ENCODE measurements at regions of chr2 and their contacts with region 1.

Region 1: GRCh38 chr2:24084386-24085361 is at the start of gene TP53I3:
- DNase-seq: peak; percentile 90
- ATAC-seq: peak; percentile 96 to 97
- total RNA-seq, gene TP53I3: 7.6 to 14.5 TPM

Region 2: GRCh38 chr2:23639406-23639982 is 445.2 kb before region 1 on chr2:
- intact Hi-C with region 1: no loop called
- DNase-seq: no peak
- ATAC-seq: no peak

Region 3: DNA sequence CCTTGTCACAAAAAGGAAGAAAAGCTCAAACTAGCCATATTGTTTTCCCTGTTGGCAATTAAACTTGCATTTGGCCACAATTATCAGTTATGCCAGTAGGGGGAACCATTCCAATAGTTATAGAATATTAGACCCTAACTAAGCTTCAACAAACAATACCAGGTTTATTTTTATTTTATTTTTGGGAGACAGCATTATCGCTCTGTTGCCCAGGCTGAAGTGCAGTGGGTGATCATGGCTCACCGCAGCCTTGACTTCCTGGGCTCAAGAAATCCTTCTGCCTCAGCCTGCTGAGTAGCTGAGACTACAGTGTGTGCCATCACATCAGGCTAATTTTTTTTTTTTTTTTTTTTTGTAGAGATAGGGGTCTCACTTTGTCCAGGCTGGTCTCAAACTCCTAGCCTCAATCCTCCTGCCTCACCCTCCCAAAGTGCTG is 259.9 kb before region 1 on chr2:
- intact Hi-C with region 1: loop called in 1 of 2 experiments (anchors 5 kb)
- DNase-seq: no peak
- ATAC-seq: peak; percentile 31 to 34

Region 4: GRCh38 chr2:23926750-23927571 is 157.7 kb before region 1 on chr2 and contains the start of gene ATAD2B:
- intact Hi-C with region 1: loop called in 1 of 2 experiments (anchors 5 kb)
- DNase-seq: peak; percentile 91
- ATAC-seq: peak; percentile 95 to 96
- total RNA-seq, gene ATAD2B: 6.5 to 12.1 TPM

Measured in left cardiac atrium (tissue), 4 donors.